ENCODE measurements at regions of chr1 and their contacts with region 1.

Region 1: GRCh38 chr1:234610348-234611152 is 572 bp upstream of the IRF2BP2 start:
- DNase-seq: peak; percentile 95
- H3K4me3 ChIP-seq: peak overlapping the region; percentile 61 to 62
- H3K27ac ChIP-seq: peak overlapping the region; percentile 89 to 97
- H3K4me1 ChIP-seq: peaks cover 38% of the 10 kb centered on the region
- H3K27me3 ChIP-seq: no peaks in the 10 kb centered on the region
- CTCF ChIP-seq: peak in 2 of 3 experiments; percentile 16 to 24
- POLR2A ChIP-seq: peak; percentile 98

Region 2: GRCh38 chr1:234665975-234666605 is 55.5 kb after region 1 on chr1:
- intact Hi-C with region 1: loop called (anchors 2 kb)
- DNase-seq: peak; percentile 45
- H3K4me3 ChIP-seq: no peak overlapping the region
- H3K27ac ChIP-seq: peak overlapping the region; percentile 85 to 86
- H3K4me1 ChIP-seq: peaks cover 22% of the 10 kb centered on the region
- H3K27me3 ChIP-seq: no peaks in the 10 kb centered on the region
- CTCF ChIP-seq: no peak
- POLR2A ChIP-seq: no peak

Region 3: GRCh38 chr1:234722904-234723720 is 112.6 kb after region 1 on chr1:
- intact Hi-C with region 1: loop called (anchors 2 kb)
- DNase-seq: peak; percentile 67
- H3K4me3 ChIP-seq: peak overlapping the region; percentile 4 to 13
- H3K27ac ChIP-seq: peak overlapping the region; percentile 89 to 96
- H3K4me1 ChIP-seq: peaks cover 94% of the 10 kb centered on the region
- H3K27me3 ChIP-seq: no peaks in the 10 kb centered on the region
- CTCF ChIP-seq: no peak
- POLR2A ChIP-seq: no peak

Region 4: DNA sequence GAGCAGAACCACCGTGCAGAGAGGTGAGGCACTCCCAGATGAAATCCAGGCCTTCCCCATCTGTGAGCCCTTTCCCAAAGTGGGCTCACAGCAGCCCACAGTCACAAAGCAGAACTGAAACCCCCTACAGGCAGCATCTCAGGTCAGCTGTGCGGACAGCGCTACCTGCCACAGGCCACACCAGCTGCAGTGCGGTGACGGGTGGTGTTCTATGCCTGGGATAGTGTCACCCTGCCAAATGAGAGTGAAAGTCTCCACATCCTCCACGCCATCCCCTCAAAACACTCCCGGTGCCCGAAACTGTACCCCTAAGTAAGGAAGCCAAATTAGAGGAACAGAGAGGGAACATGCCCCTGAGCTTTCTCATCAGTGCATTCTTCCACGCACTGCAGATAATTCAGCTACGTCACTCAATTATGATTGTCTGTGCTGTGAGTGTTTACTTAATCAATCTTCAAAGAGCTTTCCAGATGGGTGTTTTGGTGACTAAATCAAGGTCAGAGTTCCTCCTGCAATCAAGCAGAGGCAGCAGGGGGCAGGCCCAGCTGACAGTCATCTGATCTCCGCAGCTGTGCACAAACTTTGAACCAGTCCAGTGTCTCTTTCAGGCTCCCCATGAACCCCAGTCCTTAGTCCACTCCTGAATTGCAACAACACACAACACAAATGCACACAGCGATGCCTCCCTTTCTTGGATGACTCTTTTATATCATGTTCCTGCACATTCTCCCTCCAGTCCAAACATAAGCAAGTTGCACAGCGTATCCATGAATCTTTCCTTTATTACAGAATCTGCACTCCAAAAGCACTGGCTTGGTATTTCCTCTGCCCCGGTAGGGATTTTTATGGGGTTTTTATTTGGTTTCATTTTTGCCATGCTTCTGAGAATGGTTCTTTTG is 368.1 kb after region 1 on chr1:
- intact Hi-C with region 1: loop called (anchors 10 kb)
- DNase-seq: peak; percentile 74
- H3K4me3 ChIP-seq: no peak overlapping the region
- H3K27ac ChIP-seq: peak overlapping the region; percentile 64 to 90
- H3K4me1 ChIP-seq: peaks cover 41% of the 10 kb centered on the region
- H3K27me3 ChIP-seq: no peaks in the 10 kb centered on the region
- CTCF ChIP-seq: no peak
- POLR2A ChIP-seq: no peak

Region 5: GRCh38 chr1:235075188-235075926 is 464.8 kb after region 1 on chr1:
- intact Hi-C with region 1: loop called (anchors 5 kb)
- DNase-seq: no peak
- H3K4me3 ChIP-seq: no peak overlapping the region
- H3K27ac ChIP-seq: peak overlapping the region; percentile 44 to 50
- H3K4me1 ChIP-seq: peaks cover 34% of the 10 kb centered on the region
- H3K27me3 ChIP-seq: no peaks in the 10 kb centered on the region
- CTCF ChIP-seq: no peak
- POLR2A ChIP-seq: no peak

Region 6: GRCh38 chr1:235938709-235939479 is 1328.3 kb after region 1 on chr1:
- intact Hi-C with region 1: no loop called
- DNase-seq: no peak
- H3K4me3 ChIP-seq: no peak overlapping the region
- H3K27ac ChIP-seq: no peak overlapping the region
- H3K4me1 ChIP-seq: peaks cover 12% of the 10 kb centered on the region
- H3K27me3 ChIP-seq: no peaks in the 10 kb centered on the region
- CTCF ChIP-seq: no peak
- POLR2A ChIP-seq: no peak